ENCODE measurements at regions of chr3 and their contacts with region 1.

Region 1: DNA sequence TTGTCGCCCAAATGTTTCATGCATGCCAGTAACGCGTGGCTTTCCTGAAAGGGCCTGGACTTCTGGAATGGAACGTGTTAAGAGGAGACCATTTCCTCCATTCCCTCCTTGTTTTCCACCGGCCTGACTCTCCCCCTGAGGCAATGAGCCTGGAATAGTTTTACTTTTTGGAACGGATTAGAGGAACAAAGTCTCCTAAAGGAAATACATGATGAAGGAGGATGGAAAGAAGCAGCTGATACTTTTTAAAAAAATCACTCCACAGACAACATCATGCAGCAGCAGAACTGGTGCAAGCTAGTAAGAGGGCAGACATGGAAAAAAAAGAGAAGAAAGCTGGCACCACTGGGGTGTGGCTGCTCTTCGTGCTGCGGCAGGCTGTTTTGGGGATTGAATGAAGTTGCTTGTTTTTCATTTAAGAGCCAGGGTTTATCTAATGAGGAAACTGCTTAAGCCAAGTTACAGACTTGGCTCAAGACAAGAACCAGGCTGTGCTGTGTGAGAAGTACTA is 3.6 kb upstream of the KBTBD12 start:
- DNase-seq: no peak

Region 2: DNA sequence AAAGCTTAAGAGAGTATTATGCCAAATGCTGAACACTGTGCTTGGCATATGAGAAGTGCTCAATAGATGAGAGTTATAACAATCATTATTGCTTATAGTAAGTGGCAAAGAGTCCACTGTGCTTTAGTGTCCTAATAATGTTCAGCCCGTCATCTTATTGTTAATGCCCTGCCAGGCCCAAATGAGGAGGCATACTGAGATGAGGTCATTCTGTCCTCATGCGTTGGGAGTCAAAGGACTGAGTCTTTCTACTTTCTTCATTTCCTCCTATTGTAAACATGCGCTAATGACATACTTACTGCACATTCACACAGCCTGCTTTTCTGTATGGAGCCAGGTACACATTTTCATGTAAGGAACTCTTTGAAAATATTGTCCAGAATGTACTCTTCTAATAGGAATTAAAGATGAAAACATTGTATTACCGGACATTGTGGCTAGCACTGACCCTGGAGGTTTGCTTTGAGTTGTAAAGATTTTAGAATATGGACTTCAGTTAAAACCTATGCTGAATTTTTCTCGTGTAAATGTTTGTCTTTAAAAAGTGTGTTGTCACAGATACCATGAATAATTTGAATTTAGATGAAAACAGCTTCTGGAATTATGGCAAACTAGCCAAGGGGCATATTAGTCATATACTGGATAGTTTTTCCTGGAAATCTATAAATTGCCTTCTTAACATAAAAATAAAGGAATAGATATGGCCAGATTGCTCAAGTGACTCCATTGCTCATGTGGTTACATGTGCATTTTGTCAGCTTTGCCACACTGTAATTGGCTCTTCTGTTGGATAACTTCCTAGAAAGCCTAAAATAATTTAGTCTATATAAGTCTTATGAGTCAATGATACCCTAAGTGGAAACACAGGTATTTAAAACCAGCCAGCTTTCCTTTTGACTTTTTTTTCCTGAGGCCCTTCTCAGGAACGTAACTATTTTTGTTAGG is 41.9 kb after region 1 on chr3:
- intact Hi-C with region 1: loop called (anchors 2 kb)
- DNase-seq: no peak

Measured in cardiac septum (tissue), 1 donor.